Activated CD8-positive, alpha-beta T cell treated with anti-CD3 and anti-CD28 coated beads for 36 hours (primary cell): ENCODE measurements at regions of chr20 and their contacts with region 1.

Region 1: DNA sequence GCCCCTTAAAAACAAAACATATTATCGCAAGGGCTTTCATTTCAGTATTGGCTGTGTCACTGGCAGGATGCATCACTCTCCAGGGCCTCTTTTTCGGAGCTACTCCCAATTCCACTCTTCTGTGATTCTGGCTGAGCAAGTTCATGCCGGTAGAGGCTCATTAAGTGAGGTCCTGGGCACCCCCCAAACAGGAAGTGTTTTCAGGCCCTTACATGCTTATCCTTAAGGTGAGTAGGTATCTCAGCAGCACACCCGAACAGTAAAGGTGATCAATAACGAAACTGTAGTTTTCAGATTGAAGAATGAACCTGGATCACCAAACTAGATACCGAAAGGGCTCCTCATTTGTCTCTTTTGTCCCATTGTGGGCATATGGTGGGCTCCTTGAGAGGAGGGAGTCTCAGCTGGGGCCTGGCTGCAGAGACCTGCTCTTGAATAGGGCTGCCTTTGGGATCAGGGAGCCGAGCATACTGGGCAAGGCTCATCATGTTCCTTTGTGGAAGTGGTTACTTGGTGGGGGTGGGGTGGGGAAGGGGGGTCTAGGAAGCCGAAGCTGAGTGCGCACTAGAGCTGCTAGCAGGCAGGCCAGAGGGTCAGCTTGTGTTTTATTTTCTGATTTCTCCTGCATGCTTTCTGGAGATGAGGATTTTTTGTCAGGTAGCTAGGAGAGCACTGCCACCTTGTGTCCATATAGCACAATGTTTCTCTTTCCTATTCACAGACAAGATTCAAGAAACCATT is 65.2 kb downstream of the CDS2 start:
- DNase-seq: peak; percentile 59
- ATAC-seq: peak; percentile 84
- H3K4me3 Mint-ChIP-seq: no peak overlapping the region
- H3K27ac Mint-ChIP-seq: peak overlapping the region; percentile 67
- H3K4me1 Mint-ChIP-seq: peaks cover 10% of the 10 kb centered on the region
- H3K27me3 Mint-ChIP-seq: no peaks in the 10 kb centered on the region
- CTCF ChIP-seq: peak; percentile 75

Region 2: GRCh38 chr20:5119435-5120188 is 72.4 kb before region 1 on chr20 and contains the start of gene PCNA:
- CTCF ChIA-PET with region 1: interaction called, 84 read pairs
- POLR2A ChIA-PET with region 1: interaction called, 14 read pairs
- intact Hi-C with region 1: no loop called
- DNase-seq: peak; percentile 99
- ATAC-seq: peak; percentile 92
- H3K4me3 Mint-ChIP-seq: peak within 1 kb of the TSS; percentile 90
- H3K27ac Mint-ChIP-seq: peak within 1 kb of the TSS; percentile 94
- H3K4me1 Mint-ChIP-seq: peaks cover 39% of the 10 kb centered on the region
- H3K27me3 Mint-ChIP-seq: no peaks in the 10 kb centered on the region
- CTCF ChIP-seq: no peak
- total RNA-seq, gene PCNA: 600 to 627 TPM

Region 3: DNA sequence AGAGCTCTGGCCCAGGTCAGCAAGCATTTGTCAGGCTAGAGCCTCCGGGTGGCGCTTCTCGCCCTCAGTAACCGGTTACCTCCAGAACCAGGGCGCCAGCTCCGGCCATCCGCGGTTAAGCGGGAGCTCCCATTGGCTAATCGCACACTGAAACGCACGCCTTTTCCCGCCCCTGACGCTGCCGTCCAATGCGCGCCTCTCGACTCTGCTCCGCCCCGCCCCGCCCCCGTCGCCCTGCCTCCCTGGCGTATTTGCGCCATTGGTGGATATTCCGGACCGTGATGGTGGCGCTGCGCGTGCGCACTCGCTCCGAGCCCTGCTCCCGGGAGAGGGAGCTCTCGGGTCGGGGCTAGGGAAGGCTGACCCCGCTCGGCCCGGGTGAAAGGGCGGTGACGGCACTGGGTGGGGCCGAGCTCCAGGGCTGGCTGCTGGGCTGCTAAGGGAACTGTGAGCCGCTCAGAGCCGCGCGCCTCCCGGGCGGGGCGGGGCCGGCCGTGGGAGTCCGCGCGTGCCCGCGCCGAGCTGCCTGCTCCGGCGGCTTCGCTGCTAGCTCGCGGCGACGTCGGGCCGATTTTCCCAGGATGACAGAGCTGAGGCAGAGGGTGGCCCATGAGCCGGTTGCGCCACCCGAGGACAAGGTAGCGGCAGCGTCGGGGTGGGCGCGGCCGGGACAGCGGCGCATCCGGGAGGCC is 65.3 kb before region 1 on chr20 and contains the start of gene CDS2:
- CTCF ChIA-PET with region 1: interaction called, 84 read pairs
- POLR2A ChIA-PET with region 1: interaction called, 17 read pairs
- intact Hi-C with region 1: loop called (anchors 2 kb)
- DNase-seq: peak; percentile 100
- ATAC-seq: peak; percentile 86
- H3K4me3 Mint-ChIP-seq: peak within 1 kb of the TSS; percentile 88
- H3K27ac Mint-ChIP-seq: peak within 1 kb of the TSS; percentile 97
- H3K4me1 Mint-ChIP-seq: peaks cover 36% of the 10 kb centered on the region
- H3K27me3 Mint-ChIP-seq: no peaks in the 10 kb centered on the region
- CTCF ChIP-seq: peak; percentile 51
- total RNA-seq, gene CDS2: 30.2 to 34.7 TPM

Region 4: GRCh38 chr20:5168651-5169396 is 23.2 kb before region 1 on chr20:
- CTCF ChIA-PET with region 1: interaction called, 10 read pairs
- POLR2A ChIA-PET with region 1: interaction called, 3 read pairs
- intact Hi-C with region 1: no loop called
- DNase-seq: no peak
- ATAC-seq: peak; percentile 49
- H3K4me3 Mint-ChIP-seq: no peak overlapping the region
- H3K27ac Mint-ChIP-seq: peak overlapping the region; percentile 76
- H3K4me1 Mint-ChIP-seq: peaks cover 64% of the 10 kb centered on the region
- H3K27me3 Mint-ChIP-seq: no peaks in the 10 kb centered on the region
- CTCF ChIP-seq: no peak

Region 5: DNA sequence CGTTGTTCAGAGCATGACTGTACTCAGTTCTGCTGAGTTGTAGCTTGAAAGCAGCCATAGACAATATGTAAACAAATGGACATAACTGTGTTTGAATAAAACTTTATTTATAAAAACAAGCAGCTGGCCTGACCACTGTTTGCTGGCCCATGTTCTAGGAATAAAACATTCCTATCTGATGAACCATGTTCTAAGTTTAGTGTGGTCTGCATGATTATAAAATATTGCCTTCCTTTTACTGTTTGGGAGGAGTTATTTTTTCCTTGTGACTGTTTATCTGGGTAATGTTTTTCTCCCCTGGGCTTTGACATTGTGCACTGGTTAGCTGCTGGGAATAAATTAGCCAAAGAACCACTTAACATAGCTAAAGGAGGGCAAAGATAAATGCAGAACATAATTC is 10.0 kb before region 1 on chr20:
- CTCF ChIA-PET with region 1: interaction called, 16 read pairs
- POLR2A ChIA-PET with region 1: interaction called, 3 read pairs
- intact Hi-C with region 1: no loop called
- DNase-seq: no peak
- ATAC-seq: no peak
- H3K4me3 Mint-ChIP-seq: no peak overlapping the region
- H3K27ac Mint-ChIP-seq: no peak overlapping the region
- H3K4me1 Mint-ChIP-seq: peaks cover 4% of the 10 kb centered on the region
- H3K27me3 Mint-ChIP-seq: no peaks in the 10 kb centered on the region
- CTCF ChIP-seq: no peak

Region 6: GRCh38 chr20:5205348-5206210 is 13.6 kb after region 1 on chr20:
- CTCF ChIA-PET with region 1: interaction called, 35 read pairs
- POLR2A ChIA-PET with region 1: no interaction called
- intact Hi-C with region 1: no loop called
- DNase-seq: peak; percentile 81
- ATAC-seq: peak; percentile 99
- H3K4me3 Mint-ChIP-seq: no peak overlapping the region
- H3K27ac Mint-ChIP-seq: no peak overlapping the region
- H3K4me1 Mint-ChIP-seq: no peaks in the 10 kb centered on the region
- H3K27me3 Mint-ChIP-seq: no peaks in the 10 kb centered on the region
- CTCF ChIP-seq: peak; percentile 95